WTC11 (cell line): ENCODE measurements at regions of chr5 and their contacts with region 1.

Region 1: GRCh38 chr5:177370488-177371119 is 12.9 kb downstream of the RGS14 start:
- DNase-seq: peak; percentile 99
- ATAC-seq: peak; percentile 78
- H3K4me3 Mint-ChIP-seq: peak overlapping the region; percentile 49
- H3K27ac Mint-ChIP-seq: peak overlapping the region; percentile 76
- H3K4me1 Mint-ChIP-seq: peaks cover 56% of the 10 kb centered on the region
- H3K27me3 Mint-ChIP-seq: peaks cover 5% of the 10 kb centered on the region
- CTCF ChIP-seq: peak; percentile 45; the same call in 1 of the 2 replicates

Region 2: GRCh38 chr5:177317959-177318377 is 52.6 kb before region 1 on chr5:
- CTCF ChIA-PET with region 1: interaction called, 55 read pairs
- POLR2A ChIA-PET with region 1: interaction called, 8 read pairs
- DNase-seq: peak; percentile 83
- ATAC-seq: peak; percentile 57
- H3K4me3 Mint-ChIP-seq: peak overlapping the region; percentile 17; the same call in 1 of the 2 replicates
- H3K27ac Mint-ChIP-seq: peak overlapping the region; percentile 70
- H3K4me1 Mint-ChIP-seq: peaks cover 11% of the 10 kb centered on the region
- H3K27me3 Mint-ChIP-seq: no peaks in the 10 kb centered on the region
- CTCF ChIP-seq: peak; percentile 72

Region 3: DNA sequence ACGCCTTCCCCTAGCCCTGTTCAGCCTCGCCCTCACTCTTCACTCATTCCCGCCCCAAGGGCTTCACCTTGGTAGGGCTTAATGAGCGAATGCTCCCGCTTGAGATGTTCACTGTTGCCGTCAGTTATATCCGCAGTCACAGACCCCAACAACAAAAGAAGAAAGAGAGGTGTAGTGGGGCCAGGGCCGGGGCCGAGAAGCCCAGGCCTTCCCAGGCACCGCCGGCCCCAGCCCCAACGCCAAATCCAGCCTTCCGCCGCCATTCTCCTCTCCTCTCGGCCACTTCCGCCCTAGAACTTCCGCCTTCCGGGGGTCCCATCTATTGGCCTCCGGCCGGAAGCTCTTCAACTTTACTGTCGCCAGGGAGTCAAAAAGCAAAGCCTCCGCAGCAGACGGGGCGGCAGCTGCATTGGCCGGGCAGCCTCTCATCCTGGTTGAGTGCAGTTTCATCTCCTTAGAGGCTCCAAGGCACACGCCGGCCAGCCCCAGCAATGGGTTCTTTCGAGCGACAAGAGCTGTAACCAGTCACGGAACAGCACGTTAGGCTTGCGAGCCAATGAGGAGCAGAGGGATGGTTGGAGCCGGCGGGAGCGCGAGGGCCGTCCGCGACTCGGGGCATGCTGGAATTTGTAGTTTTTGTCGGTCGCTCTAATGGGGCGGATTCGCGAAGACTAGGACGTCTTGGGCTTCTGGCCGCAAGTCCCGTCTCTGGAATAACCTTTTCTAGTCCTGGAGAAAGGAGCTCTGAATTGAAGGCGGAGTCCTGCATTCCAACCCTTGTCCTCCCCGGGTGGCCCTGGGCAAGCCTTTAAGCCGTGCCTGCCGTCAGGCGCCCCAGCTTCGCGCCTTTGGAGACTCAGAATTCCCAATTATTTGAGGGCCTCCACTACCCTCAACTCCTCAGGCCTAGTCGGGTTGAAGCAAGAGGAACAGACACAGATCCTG is 18.9 kb before region 1 on chr5 and contains the start of gene LMAN2:
- CTCF ChIA-PET with region 1: interaction called, 51 read pairs
- POLR2A ChIA-PET with region 1: interaction called, 10 read pairs
- DNase-seq: peak; percentile 90
- ATAC-seq: peak; percentile 98
- H3K4me3 Mint-ChIP-seq: peak within 1 kb of the TSS; percentile 98
- H3K27ac Mint-ChIP-seq: peak within 1 kb of the TSS; percentile 100
- H3K4me1 Mint-ChIP-seq: peaks cover 32% of the 10 kb centered on the region
- H3K27me3 Mint-ChIP-seq: peaks cover 28% of the 10 kb centered on the region
- CTCF ChIP-seq: no peak
- total RNA-seq, gene LMAN2: 141 to 162 TPM (median 147 TPM) in 3 replicates

Region 4: GRCh38 chr5:177390363-177391300 is 20.0 kb after region 1 on chr5:
- CTCF ChIA-PET with region 1: interaction called, 216 read pairs
- POLR2A ChIA-PET with region 1: interaction called, 4 read pairs
- DNase-seq: peak; percentile 93
- ATAC-seq: peak; percentile 88
- H3K4me3 Mint-ChIP-seq: no peak overlapping the region
- H3K27ac Mint-ChIP-seq: no peak overlapping the region
- H3K4me1 Mint-ChIP-seq: peaks cover 32% of the 10 kb centered on the region
- H3K27me3 Mint-ChIP-seq: peaks cover 31% of the 10 kb centered on the region
- CTCF ChIP-seq: peak; percentile 98

Region 5: DNA sequence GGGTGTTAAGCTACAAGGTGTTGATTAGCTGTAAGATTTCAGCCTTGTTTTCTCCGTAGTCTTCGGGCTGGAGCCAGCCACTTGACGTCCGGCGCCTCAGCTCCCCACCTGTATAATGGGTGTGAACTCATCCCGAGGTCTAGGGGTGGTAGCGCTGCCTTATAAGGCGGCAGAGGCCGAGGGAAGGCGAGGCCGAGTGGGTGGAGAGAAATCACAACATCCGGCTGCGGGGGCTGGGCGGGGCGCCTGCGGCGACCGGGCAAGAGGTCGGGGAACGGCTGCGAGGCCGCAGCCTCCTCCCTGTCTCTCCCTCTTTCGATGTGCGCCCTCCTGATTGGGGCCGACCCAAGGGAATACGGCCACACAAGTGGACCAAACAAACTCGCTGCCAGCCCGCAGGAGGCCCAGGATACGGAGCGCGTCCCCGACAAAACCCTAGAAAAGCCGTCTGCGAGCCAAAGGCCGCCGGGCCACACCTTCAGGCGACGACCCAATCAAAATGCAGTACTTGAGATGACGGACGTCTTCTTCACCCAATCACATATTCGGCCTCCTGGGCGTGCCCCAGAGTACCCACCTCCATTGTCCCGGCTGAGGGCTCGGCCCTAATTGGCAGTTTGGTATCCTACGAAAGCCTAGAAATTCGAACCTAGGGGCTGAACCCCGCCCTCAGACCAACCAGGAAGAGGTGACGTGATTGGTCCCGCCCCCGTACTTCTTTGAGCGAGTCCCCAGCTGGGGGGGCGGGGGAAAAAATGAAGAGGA is 55.4 kb after region 1 on chr5:
- CTCF ChIA-PET with region 1: interaction called, 19 read pairs
- POLR2A ChIA-PET with region 1: interaction called, 9 read pairs
- DNase-seq: peak; percentile 100
- ATAC-seq: peak; percentile 94
- H3K4me3 Mint-ChIP-seq: peak overlapping the region; percentile 84
- H3K27ac Mint-ChIP-seq: peak overlapping the region; percentile 98
- H3K4me1 Mint-ChIP-seq: peaks cover 18% of the 10 kb centered on the region
- H3K27me3 Mint-ChIP-seq: peaks cover 5% of the 10 kb centered on the region
- CTCF ChIP-seq: no peak

Region 6: DNA sequence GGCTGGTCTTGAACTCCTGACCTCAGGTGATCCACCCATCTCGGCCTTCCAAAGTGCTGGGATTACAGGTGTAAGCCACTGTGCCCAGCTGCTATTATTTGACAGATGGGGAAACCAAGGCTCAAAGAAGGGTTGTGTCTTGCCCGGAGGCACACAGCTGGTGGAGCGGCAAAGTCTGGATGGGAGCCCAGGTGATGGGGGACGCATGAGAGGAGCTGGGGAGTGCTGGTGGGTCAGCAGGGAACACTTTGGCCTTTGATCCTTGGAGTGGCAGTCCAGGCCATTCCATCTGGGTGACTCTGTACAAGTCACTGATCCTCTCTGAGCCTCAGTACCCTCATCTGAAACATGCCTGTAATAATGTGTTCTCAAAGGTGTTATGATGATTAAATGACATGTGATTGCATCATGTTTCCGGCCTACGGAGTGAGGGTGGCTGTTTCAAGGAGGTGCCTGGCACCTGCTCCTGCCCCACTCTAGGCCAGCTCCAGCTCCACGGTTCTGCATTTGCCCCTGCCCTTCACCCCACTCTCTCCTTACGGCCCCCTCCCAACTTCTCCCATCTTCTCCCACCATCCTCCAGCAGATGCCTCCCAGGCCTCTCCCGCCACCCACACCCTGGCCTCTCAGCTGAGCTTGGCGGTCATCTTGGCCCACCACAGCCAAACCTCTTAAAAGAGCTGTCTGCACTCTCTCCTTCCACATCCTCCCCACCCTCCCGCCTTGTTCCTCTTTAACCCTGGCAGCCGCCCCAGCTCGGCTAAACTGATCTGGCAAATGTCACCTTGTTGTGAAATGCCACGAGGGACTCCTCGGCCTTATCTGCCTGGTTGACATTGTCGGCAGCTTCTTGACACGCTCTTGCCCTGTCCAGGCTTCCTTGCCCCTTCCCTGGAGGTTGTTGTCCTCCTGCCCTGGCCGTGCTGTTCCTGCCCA is 108.4 kb after region 1 on chr5:
- CTCF ChIA-PET with region 1: interaction called, 13 read pairs
- POLR2A ChIA-PET with region 1: interaction called, 3 read pairs
- DNase-seq: no peak
- ATAC-seq: no peak
- H3K4me3 Mint-ChIP-seq: no peak overlapping the region
- H3K27ac Mint-ChIP-seq: peak overlapping the region; percentile 57; the same call in 1 of the 2 replicates
- H3K4me1 Mint-ChIP-seq: peaks cover 27% of the 10 kb centered on the region
- H3K27me3 Mint-ChIP-seq: no peaks in the 10 kb centered on the region
- CTCF ChIP-seq: no peak